Adrenal gland (tissue), 19 donors: ENCODE measurements at regions of chr15 and their contacts with region 1.

Region 1: GRCh38 chr15:84955089-84955848 is 26.4 kb upstream of the PDE8A start:
- DNase-seq: peak; percentile 80 to 93 (median 88)
- H3K4me3 ChIP-seq: peak overlapping the region in 2 of 4 donors; percentile 14 to 54
- H3K27ac ChIP-seq: peak overlapping the region in 2 of 5 donors; percentile 18 to 70
- H3K4me1 ChIP-seq: peaks cover 6 to 21% of the 10 kb centered on the region in 2 donors
- H3K27me3 ChIP-seq: no peaks in the 10 kb centered on the region
- CTCF ChIP-seq: peak; percentile 81 to 93 (median 92)
- POLR2A ChIP-seq: peak in 1 of 2 donors; percentile 8

Region 2: GRCh38 chr15:84671211-84671610 is 284.1 kb before region 1 on chr15:
- intact Hi-C with region 1: no loop called
- DNase-seq: no peak
- H3K4me3 ChIP-seq: no peak overlapping the region
- H3K27ac ChIP-seq: no peak overlapping the region
- H3K4me1 ChIP-seq: no peaks in the 10 kb centered on the region
- H3K27me3 ChIP-seq: no peaks in the 10 kb centered on the region
- CTCF ChIP-seq: no peak
- POLR2A ChIP-seq: no peak

Region 3: DNA sequence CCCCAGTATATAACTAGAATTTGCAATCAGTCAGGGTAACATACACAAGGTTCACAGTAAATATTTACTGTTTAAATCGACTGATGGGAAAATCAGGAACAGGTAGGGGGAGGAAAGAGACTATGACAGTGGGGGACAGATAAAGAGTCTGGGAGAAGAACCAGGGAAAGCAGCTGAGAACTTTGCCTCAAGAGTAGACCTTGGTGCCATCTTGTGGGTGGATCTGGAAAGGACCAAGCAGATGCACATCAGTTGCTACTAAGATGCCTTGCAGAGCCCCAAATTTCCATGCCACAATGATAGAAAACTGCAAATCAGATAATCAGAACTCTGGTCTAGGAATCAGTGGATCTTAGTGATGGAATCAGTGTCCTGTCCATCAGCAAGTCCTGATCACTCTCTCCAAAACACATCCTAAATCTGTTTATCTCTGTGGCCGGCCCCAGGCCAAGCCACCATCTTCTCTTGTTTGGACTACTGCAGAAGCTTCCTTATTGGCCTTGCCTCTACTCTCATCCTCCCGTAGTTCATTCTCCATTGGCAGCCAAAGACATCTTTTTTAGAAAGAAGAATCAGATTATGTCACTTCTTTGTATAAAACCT is 89.1 kb after region 1 on chr15:
- intact Hi-C with region 1: loop called (anchors 10 kb)
- DNase-seq: peak; percentile 66 to 87 (median 71)
- H3K4me3 ChIP-seq: no peak overlapping the region
- H3K27ac ChIP-seq: no peak overlapping the region
- H3K4me1 ChIP-seq: peaks cover 0 to 33% of the 10 kb centered on the region in 2 donors
- H3K27me3 ChIP-seq: no peaks in the 10 kb centered on the region
- CTCF ChIP-seq: peak; percentile 39 to 78 (median 68)
- POLR2A ChIP-seq: no peak